H1 (cell line): ENCODE measurements at regions of chr1 and their contacts with region 1.

Region 1: DNA sequence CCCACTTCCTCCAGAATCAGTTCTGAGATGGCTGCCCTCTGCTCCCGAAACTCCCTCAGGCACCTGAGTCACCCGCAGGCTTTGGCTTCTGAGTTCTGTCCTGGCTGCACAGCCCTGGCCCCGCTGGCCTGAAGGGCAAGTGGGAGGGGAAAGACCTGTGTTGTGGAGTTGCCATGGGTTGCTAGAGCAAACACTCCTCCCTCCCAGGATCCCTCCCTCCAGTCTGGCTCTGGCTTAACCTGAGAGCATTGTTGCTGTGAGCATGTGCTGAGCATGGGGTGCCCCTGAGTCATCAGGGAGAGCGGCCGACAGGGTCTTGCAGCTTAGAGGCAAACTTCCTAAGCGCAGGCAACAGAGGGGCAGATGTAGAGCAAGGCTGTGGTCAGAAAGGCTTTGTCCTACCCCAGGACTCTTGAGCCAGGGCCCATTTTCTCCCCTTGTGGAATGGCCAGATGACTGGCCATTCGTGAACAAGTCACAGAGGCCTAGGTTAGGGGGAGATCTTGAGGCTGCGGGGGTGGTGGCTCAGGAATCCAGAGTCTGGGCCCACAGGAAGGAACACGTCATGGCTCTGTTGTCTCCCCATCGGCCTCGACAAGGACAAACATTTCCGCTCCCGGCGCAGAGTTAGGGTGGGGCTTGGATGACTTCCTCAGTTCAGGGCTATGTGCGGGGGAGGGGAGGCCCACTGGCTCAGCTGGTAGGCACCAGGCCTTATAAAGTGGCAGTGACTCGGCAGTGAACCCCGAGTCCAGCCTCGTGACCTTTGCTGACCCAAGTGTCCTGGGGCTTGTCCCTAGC is at the start of gene DYNLT4:
- DNase-seq: peak in 1 of 2 experiments; percentile 89
- H3K4me3 ChIP-seq: peak within 1 kb of the TSS in 2 of 4 experiments; percentile 5 to 37; a peak in 3 of 8 replicates
- H3K27ac ChIP-seq: peak within 1 kb of the TSS; percentile 96
- H3K4me1 ChIP-seq: peaks cover 10 to 37% (median 28%) of the 10 kb centered on the region in 4 experiments
- H3K27me3 ChIP-seq: peaks cover 0 to 4% (median 1%) of the 10 kb centered on the region in 4 experiments; a peak in 3 of 7 replicates
- CTCF ChIP-seq: no peak
- EP300 ChIP-seq: peak; percentile 36 to 89; a peak in 2 of 3 replicates
- POLR2A ChIP-seq: peak in 1 of 2 experiments; percentile 80; a peak in 2 of 3 replicates
- RAD21 ChIP-seq: no peak
- total RNA-seq, gene DYNLT4: not detected in 2 replicates

Region 2: DNA sequence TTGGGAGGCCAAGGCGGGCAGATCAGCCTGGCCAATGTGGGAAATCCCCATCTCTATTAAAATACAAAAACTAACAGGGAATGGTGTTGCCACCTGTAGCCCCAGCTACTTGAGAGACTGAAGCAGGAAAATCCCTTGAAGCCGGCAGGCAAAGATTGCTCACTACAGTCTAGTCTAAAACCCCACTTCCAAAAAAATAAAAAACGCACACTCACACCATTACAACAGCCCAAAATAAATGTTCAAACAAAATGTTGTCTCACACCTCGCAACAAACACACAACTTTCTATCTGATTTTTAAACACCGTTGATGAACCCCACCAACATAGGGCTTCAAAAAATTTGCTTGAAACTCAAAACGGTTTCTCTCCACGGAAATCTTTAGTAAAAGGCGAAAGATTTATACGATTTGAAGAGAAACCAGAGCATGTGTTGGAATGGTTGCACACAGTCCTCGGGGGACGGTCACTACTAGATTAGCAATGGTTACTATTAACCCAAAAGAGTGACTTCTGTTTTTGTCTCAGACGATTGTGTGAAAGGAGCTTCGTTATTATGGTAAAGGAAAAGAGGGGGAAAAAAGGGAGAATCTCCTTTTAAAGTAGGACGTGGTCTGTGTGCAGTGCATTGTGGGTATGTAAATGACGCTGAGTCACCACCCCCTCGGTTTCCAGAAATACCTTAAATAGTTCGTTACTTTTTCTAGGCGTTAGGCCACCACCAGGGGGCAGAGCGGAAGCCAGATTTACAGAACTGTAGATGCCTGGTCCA is 76.5 kb before region 1 on chr1 and contains the start of gene RNU5D-1:
- CTCF ChIA-PET with region 1: interaction called, 15 read pairs
- POLR2A ChIA-PET with region 1: interaction called, 24 read pairs
- DNase-seq: peak in 1 of 2 experiments; percentile 94
- H3K4me3 ChIP-seq: peak within 1 kb of the TSS in 1 of 4 experiments; percentile 31; a peak in 1 of 8 replicates
- H3K27ac ChIP-seq: peak within 1 kb of the TSS; percentile 94
- H3K4me1 ChIP-seq: peaks cover 0 to 3% (median under 1%) of the 10 kb centered on the region in 4 experiments; a peak in 4 of 7 replicates
- H3K27me3 ChIP-seq: no peaks in the 10 kb centered on the region
- CTCF ChIP-seq: peak; percentile 48 to 80 (median 55)
- EP300 ChIP-seq: 0 out of 3 replicates have a peak, but pooled peaks of 1 of the 2 experiments have one; percentile 30
- POLR2A ChIP-seq: peak; percentile 99
- RAD21 ChIP-seq: peak; percentile 14 to 32; a peak in 1 of 4 replicates
- total RNA-seq, gene RNU5D-1: 17.4 TPM in 1 of 2 replicates, not detected in the other

Region 3: DNA sequence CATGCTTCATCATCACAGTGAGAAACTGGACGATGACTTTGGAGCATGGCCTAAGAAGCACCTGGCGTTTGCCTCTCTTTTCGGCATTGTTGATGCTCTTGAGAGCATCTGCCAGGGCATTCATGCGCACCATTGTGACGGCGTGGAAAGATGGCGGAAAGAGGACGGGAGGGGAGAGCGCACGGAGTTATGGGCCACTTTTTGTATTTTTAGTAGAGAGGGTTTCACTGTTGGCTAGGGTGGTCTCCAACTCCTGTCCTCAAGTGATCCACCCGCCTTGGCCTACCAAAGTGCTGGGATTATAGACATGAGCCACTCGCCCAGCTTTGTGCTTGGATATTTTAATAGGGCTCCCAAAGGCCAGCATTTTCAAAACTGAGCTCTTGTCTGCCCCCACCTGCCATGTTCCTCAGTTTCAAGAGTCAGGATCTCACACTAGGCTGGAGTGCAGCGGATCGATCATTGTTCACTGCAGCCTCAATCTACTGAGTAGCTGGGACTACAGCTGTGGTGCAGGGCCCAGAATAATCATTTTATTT is 26.8 kb before region 1 on chr1:
- CTCF ChIA-PET with region 1: interaction called, 16 read pairs
- POLR2A ChIA-PET with region 1: interaction called, 65 read pairs
- DNase-seq: no peak
- H3K4me3 ChIP-seq: no peak overlapping the region
- H3K27ac ChIP-seq: no peak overlapping the region
- H3K4me1 ChIP-seq: peaks cover 0 to 18% (median 9%) of the 10 kb centered on the region in 4 experiments; a peak in 6 of 7 replicates
- H3K27me3 ChIP-seq: peaks cover 0 to 3% (median 0%) of the 10 kb centered on the region in 4 experiments; a peak in 3 of 7 replicates
- CTCF ChIP-seq: no peak
- EP300 ChIP-seq: no peak
- POLR2A ChIP-seq: peak in 1 of 2 experiments; percentile 65; a peak in 2 of 3 replicates
- RAD21 ChIP-seq: no peak

Region 4: GRCh38 chr1:44786138-44786840 is 21.2 kb before region 1 on chr1:
- CTCF ChIA-PET with region 1: interaction called, 51 read pairs
- POLR2A ChIA-PET with region 1: interaction called, 52 read pairs
- DNase-seq: peak in 1 of 2 experiments; percentile 94
- H3K4me3 ChIP-seq: peak overlapping the region; percentile 17 to 58 (median 46)
- H3K27ac ChIP-seq: no peak overlapping the region
- H3K4me1 ChIP-seq: peaks cover 4 to 18% (median 14%) of the 10 kb centered on the region in 4 experiments
- H3K27me3 ChIP-seq: peaks cover 0 to 7% (median 2%) of the 10 kb centered on the region in 4 experiments; a peak in 3 of 7 replicates
- CTCF ChIP-seq: peak; percentile 80 to 100 (median 100)
- EP300 ChIP-seq: peak in 1 of 2 experiments; percentile 98; a peak in 1 of 3 replicates
- POLR2A ChIP-seq: peak in 1 of 2 experiments; percentile 50; a peak in 1 of 3 replicates
- RAD21 ChIP-seq: peak; percentile 83 to 84

Region 5: GRCh38 chr1:44792783-44793714 is 14.4 kb before region 1 on chr1:
- CTCF ChIA-PET with region 1: interaction called, 51 read pairs
- POLR2A ChIA-PET with region 1: interaction called, 547 read pairs
- DNase-seq: no peak
- H3K4me3 ChIP-seq: no peak overlapping the region
- H3K27ac ChIP-seq: no peak overlapping the region; the same call in 1 of the 2 replicates
- H3K4me1 ChIP-seq: peaks cover 0 to 5% (median 5%) of the 10 kb centered on the region in 4 experiments
- H3K27me3 ChIP-seq: no peaks in the 10 kb centered on the region
- CTCF ChIP-seq: no peak
- EP300 ChIP-seq: no peak
- POLR2A ChIP-seq: no peak
- RAD21 ChIP-seq: no peak

Region 6: DNA sequence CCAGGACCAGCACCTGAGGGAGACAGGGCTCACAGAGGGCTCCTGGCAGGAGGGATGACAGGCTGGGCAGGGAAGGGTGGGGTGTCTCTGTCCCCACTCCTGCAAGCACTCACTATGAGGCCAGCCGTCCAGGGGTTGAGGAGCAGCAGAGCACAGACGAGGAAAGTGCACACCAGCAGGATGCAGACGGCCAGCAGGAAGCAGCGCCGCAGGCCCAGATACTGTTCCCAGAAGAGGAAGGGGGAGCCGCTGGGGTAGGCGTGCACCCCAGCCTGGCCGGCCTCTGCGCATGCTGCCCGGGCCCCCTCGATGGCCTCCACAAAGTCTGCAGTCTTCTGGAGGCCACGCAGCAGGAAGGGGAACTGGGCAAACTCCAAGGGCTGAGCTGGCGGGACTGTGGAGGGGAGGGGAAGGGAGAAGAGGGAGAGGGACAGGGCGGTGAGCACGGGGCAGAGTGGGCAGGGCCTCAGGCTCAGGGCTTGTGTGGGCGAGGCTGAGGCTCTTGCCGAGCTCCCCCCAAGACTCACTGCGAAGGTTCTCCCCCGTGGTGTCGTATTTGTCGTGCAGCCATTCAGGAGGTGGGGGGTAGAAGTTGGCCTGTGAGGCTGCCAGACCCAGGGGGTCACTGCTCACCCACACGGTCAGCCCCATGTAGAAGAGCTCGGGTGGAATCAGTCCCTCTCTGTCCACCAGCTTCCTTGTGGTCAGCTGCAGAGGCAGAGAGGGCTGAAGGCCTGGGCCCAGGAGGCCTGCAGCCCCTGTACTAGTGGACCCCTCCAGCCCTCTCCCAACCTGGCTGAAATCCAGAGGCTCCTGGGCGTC is 19.1 kb after region 1 on chr1:
- CTCF ChIA-PET with region 1: interaction called, 12 read pairs
- POLR2A ChIA-PET with region 1: interaction called, 547 read pairs
- DNase-seq: no peak
- H3K4me3 ChIP-seq: no peak overlapping the region
- H3K27ac ChIP-seq: no peak overlapping the region
- H3K4me1 ChIP-seq: peaks cover 0 to 9% (median 2%) of the 10 kb centered on the region in 4 experiments; a peak in 6 of 7 replicates
- H3K27me3 ChIP-seq: no peaks in the 10 kb centered on the region
- CTCF ChIP-seq: no peak
- EP300 ChIP-seq: no peak
- POLR2A ChIP-seq: no peak
- RAD21 ChIP-seq: no peak